Activated CD4-positive, alpha-beta memory T cell treated with anti-CD3 and anti-CD28 coated beads, Interleukin-2, amount 10 ng/mL, durations not matched to agents 7 days and 5 days (primary cell): ENCODE measurements at regions of chr12 and their contacts with region 1.

Region 1: GRCh38 chr12:64610149-64610678 is at the start of gene RASSF3:
- DNase-seq: peak; percentile 84
- H3K4me3 Mint-ChIP-seq: peak within 1 kb of the TSS; percentile 95
- H3K27ac Mint-ChIP-seq: peak within 1 kb of the TSS; percentile 99
- H3K4me1 Mint-ChIP-seq: peaks cover 40% of the 10 kb centered on the region
- H3K27me3 Mint-ChIP-seq: no peaks in the 10 kb centered on the region
- total RNA-seq, gene RASSF3: 81.3 to 83.7 TPM

Region 2: GRCh38 chr12:64551698-64552097 is 58.5 kb before region 1 on chr12:
- CTCF ChIA-PET with region 1: interaction called, 39 read pairs
- POLR2A ChIA-PET with region 1: interaction called, 9 read pairs
- DNase-seq: no peak
- H3K4me3 Mint-ChIP-seq: no peak overlapping the region
- H3K27ac Mint-ChIP-seq: no peak overlapping the region
- H3K4me1 Mint-ChIP-seq: peaks cover 4% of the 10 kb centered on the region
- H3K27me3 Mint-ChIP-seq: peaks cover 7% of the 10 kb centered on the region

Region 3: GRCh38 chr12:64600189-64600588 is 10.0 kb before region 1 on chr12:
- CTCF ChIA-PET with region 1: interaction called, 3 read pairs
- POLR2A ChIA-PET with region 1: interaction called, 22 read pairs
- DNase-seq: no peak
- H3K4me3 Mint-ChIP-seq: no peak overlapping the region
- H3K27ac Mint-ChIP-seq: peak overlapping the region; percentile 29
- H3K4me1 Mint-ChIP-seq: peaks cover 33% of the 10 kb centered on the region
- H3K27me3 Mint-ChIP-seq: no peaks in the 10 kb centered on the region

Region 4: GRCh38 chr12:64669270-64669842 is 59.1 kb after region 1 on chr12:
- CTCF ChIA-PET with region 1: interaction called, 34 read pairs
- POLR2A ChIA-PET with region 1: interaction called, 101 read pairs
- DNase-seq: peak; percentile 60
- H3K4me3 Mint-ChIP-seq: peak overlapping the region; percentile 82
- H3K27ac Mint-ChIP-seq: peak overlapping the region; percentile 98
- H3K4me1 Mint-ChIP-seq: peaks cover 92% of the 10 kb centered on the region
- H3K27me3 Mint-ChIP-seq: no peaks in the 10 kb centered on the region

Region 5: GRCh38 chr12:64679487-64679983 is 69.3 kb after region 1 on chr12:
- CTCF ChIA-PET with region 1: interaction called, 12 read pairs
- POLR2A ChIA-PET with region 1: interaction called, 136 read pairs
- DNase-seq: peak; percentile 73
- H3K4me3 Mint-ChIP-seq: peak overlapping the region; percentile 62
- H3K27ac Mint-ChIP-seq: peak overlapping the region; percentile 95
- H3K4me1 Mint-ChIP-seq: peaks cover 95% of the 10 kb centered on the region
- H3K27me3 Mint-ChIP-seq: no peaks in the 10 kb centered on the region

Region 6: GRCh38 chr12:64687816-64688215 is 77.6 kb after region 1 on chr12:
- CTCF ChIA-PET with region 1: interaction called, 3 read pairs
- POLR2A ChIA-PET with region 1: interaction called, 136 read pairs
- DNase-seq: no peak
- H3K4me3 Mint-ChIP-seq: no peak overlapping the region
- H3K27ac Mint-ChIP-seq: peak overlapping the region; percentile 50
- H3K4me1 Mint-ChIP-seq: peaks cover 74% of the 10 kb centered on the region
- H3K27me3 Mint-ChIP-seq: no peaks in the 10 kb centered on the region